ENCODE measurements at regions of chr7 and their contacts with region 1.

Region 1: GRCh38 chr7:123534383-123535260 is at the start of gene IQUB:
- DNase-seq: peak; percentile 99 to 100 (median 99)
- H3K4me3 ChIP-seq: peak within 1 kb of the TSS in 2 of 4 donors; percentile 46 to 66
- H3K27ac ChIP-seq: peak within 1 kb of the TSS; percentile 74 to 92 (median 90)
- H3K4me1 ChIP-seq: peaks cover 11 to 31% of the 10 kb centered on the region in 2 donors
- H3K27me3 ChIP-seq: no peaks in the 10 kb centered on the region
- CTCF ChIP-seq: no peak
- POLR2A ChIP-seq: peak in 1 of 2 donors; percentile 63
- total RNA-seq, gene IQUB: 0.86 to 3.9 (median 1.9) TPM

Region 2: GRCh38 chr7:123502201-123502600 is 32.4 kb before region 1 on chr7:
- intact Hi-C with region 1: loop called in 1 of 2 experiments (anchors 5 kb)
- DNase-seq: no peak
- H3K4me3 ChIP-seq: no peak overlapping the region
- H3K27ac ChIP-seq: no peak overlapping the region
- H3K4me1 ChIP-seq: peaks cover 11 to 12% of the 10 kb centered on the region in 2 donors
- H3K27me3 ChIP-seq: no peaks in the 10 kb centered on the region
- CTCF ChIP-seq: no peak
- POLR2A ChIP-seq: no peak

Measured in adrenal gland (tissue), 19 donors.